CD14-positive monocyte (primary cell): ENCODE measurements at regions of chr4 and their contacts with region 1.

Region 1: GRCh38 chr4:51842554-51843308 is at the start of gene DCUN1D4:
- DNase-seq: peak; percentile 96 to 98 (median 97)
- H3K4me3 ChIP-seq: peak within 1 kb of the TSS; percentile 71 to 96 (median 86)
- H3K4me3 Mint-ChIP-seq: peak within 1 kb of the TSS; percentile 97 to 98
- H3K27ac ChIP-seq: peak within 1 kb of the TSS; percentile 25 to 53
- H3K27ac Mint-ChIP-seq: peak within 1 kb of the TSS; percentile 66 to 95 (median 84)
- H3K4me1 ChIP-seq: peaks cover 13 to 22% of the 10 kb centered on the region in 2 donors
- H3K4me1 Mint-ChIP-seq: peaks cover 14% of the 10 kb centered on the region
- H3K27me3 ChIP-seq: peaks cover 0 to 9% of the 10 kb centered on the region in 2 donors
- H3K27me3 Mint-ChIP-seq: peaks cover 5 to 9% (median 7%) of the 10 kb centered on the region in 3 donors
- CTCF ChIP-seq: peak; percentile 28
- polyA plus RNA-seq, gene DCUN1D4: 4.7 to 15.2 (median 6.9) TPM

Region 2: DNA sequence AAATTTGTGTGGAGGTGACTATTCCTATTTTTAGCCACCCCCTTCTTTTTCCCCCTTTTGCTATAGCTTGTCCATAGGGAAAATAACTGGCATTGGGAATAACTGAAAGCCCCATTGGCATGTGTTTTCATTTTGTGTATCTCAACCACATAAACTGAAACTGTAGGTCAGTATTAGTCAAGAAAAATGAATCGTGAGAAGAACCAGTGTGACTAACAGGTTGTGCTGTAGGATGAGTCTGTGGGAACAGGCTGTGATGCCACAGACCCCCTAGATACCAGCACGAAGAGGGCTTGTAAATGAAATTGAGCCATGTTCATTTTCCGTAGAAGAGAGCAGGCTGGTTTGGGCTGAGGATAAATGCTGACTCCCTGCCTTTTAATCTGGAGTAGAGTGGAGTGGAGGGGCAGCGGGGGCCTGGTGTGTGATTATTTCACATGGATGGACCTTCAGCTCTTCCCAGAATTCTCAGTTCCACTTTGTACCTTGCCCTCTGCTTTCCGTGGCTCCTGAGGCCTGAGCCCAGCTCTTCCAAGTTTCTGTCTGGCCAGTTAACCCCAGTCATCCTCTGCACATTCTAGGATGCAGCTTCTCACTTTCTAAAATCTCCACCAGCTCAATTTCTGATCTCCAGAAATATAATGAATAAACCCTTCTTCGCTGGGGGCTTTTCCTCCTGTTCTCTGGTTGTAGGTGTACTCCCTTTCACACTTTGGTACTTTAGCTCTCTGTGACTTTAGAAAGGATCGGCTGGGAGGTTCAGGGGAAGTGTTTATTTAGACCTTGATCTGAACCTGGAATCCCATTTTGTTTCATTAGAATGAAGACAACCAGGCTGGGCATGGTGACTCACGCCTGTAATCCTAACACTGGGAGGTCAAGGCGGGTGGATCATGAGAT is 37.5 kb after region 1 on chr4:
- intact Hi-C with region 1: no loop called
- DNase-seq: no peak
- H3K4me3 ChIP-seq: no peak overlapping the region
- H3K4me3 Mint-ChIP-seq: no peak overlapping the region
- H3K27ac ChIP-seq: no peak overlapping the region
- H3K27ac Mint-ChIP-seq: peak overlapping the region in 3 of 7 donors; percentile 8 to 74 (median 22)
- H3K4me1 ChIP-seq: no peaks in the 10 kb centered on the region
- H3K4me1 Mint-ChIP-seq: no peaks in the 10 kb centered on the region
- H3K27me3 ChIP-seq: no peaks in the 10 kb centered on the region
- H3K27me3 Mint-ChIP-seq: peaks cover 0 to 2% (median 0%) of the 10 kb centered on the region in 3 donors
- CTCF ChIP-seq: no peak

Region 3: GRCh38 chr4:51906167-51906958 is 63.6 kb after region 1 on chr4:
- intact Hi-C with region 1: loop called in 1 of 2 experiments (anchors 10 kb)
- DNase-seq: peak; percentile 74 to 87 (median 82)
- H3K4me3 ChIP-seq: peak overlapping the region in 2 of 3 experiments; percentile 27 to 40
- H3K4me3 Mint-ChIP-seq: peak overlapping the region; percentile 6 to 71
- H3K27ac ChIP-seq: peak overlapping the region; percentile 58 to 72
- H3K27ac Mint-ChIP-seq: peak overlapping the region; percentile 77 to 91 (median 88)
- H3K4me1 ChIP-seq: peaks cover 28 to 35% of the 10 kb centered on the region in 2 donors
- H3K4me1 Mint-ChIP-seq: peaks cover 44% of the 10 kb centered on the region
- H3K27me3 ChIP-seq: no peaks in the 10 kb centered on the region
- H3K27me3 Mint-ChIP-seq: peaks cover 0 to 2% (median 0%) of the 10 kb centered on the region in 3 donors
- CTCF ChIP-seq: no peak

Region 4: DNA sequence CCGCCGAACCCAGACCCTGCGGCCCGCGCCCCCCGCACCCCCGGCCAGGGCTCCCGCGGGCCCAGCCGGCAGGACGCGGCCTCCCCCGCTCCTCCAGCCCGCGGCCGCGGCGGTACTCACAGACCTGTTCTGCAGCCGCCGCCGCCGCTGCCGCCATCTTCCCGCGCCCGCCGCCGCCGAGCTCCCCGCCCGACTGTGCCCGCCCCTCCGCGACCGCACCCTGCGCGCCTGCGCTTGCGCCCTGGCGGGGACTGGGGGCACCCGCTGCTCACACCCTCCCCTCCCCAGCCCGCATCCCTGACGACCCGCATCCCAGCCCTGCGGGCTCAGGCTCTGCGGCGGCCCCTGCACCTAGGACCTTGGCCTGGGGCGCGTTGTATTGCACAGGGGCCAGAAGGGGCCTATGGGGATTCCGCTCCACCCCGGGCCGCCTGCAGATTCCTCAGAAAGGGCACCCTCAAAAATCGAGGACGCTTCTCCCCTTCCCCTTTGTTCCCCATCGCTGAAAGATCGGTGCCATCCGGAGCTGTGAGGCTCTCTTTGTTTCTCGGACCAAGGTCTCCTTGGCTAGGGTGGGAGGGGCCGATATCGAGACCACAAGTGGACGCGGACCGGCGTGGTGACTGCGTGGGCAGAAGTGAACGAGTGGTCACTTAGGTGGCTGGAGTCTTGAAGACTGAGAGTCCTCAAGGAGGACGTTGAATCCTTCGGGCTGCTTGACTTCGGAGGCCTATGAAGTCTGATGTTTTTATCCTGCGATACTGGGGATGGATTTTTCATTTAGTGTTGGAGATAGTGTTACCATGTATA is 195.6 kb after region 1 on chr4 and contains the start of gene SGCB:
- intact Hi-C with region 1: loop called in 1 of 2 experiments (anchors 10 kb)
- DNase-seq: peak in 2 of 3 donors; percentile 15 to 20
- H3K4me3 ChIP-seq: peak within 1 kb of the TSS; percentile 33 to 78 (median 48)
- H3K4me3 Mint-ChIP-seq: peak within 1 kb of the TSS; percentile 78 to 94
- H3K27ac ChIP-seq: no peak within 1 kb of the TSS
- H3K27ac Mint-ChIP-seq: no peak within 1 kb of the TSS
- H3K4me1 ChIP-seq: peaks cover 9 to 16% of the 10 kb centered on the region in 2 donors
- H3K4me1 Mint-ChIP-seq: peaks cover 16% of the 10 kb centered on the region
- H3K27me3 ChIP-seq: peaks cover 65 to 79% of the 10 kb centered on the region in 2 donors
- H3K27me3 Mint-ChIP-seq: peaks cover 52 to 73% (median 58%) of the 10 kb centered on the region in 3 donors
- CTCF ChIP-seq: no peak
- polyA plus RNA-seq, gene SGCB: 0.77 to 0.96 (median 0.95) TPM

Region 5: GRCh38 chr4:52721968-52722815 is 879.5 kb after region 1 on chr4:
- intact Hi-C with region 1: loop called in 1 of 2 experiments (anchors 5 kb)
- DNase-seq: peak; percentile 92 to 94 (median 92)
- H3K4me3 ChIP-seq: peak overlapping the region; percentile 65 to 82 (median 74)
- H3K4me3 Mint-ChIP-seq: peak overlapping the region; percentile 79 to 88
- H3K27ac ChIP-seq: peak overlapping the region; percentile 71 to 82
- H3K27ac Mint-ChIP-seq: peak overlapping the region; percentile 68 to 92 (median 88)
- H3K4me1 ChIP-seq: peaks cover 13 to 15% of the 10 kb centered on the region in 2 donors
- H3K4me1 Mint-ChIP-seq: peaks cover 12% of the 10 kb centered on the region
- H3K27me3 ChIP-seq: no peaks in the 10 kb centered on the region
- H3K27me3 Mint-ChIP-seq: peaks cover 1 to 5% (median 5%) of the 10 kb centered on the region in 3 donors
- CTCF ChIP-seq: no peak

Region 6: GRCh38 chr4:53365486-53366300 is 1523.0 kb after region 1 on chr4 and contains the start of gene SCFD2:
- intact Hi-C with region 1: loop called in 1 of 2 experiments (anchors 5 kb)
- DNase-seq: peak; percentile 97 to 99 (median 97)
- H3K4me3 ChIP-seq: peak within 1 kb of the TSS; percentile 59 to 99 (median 84)
- H3K4me3 Mint-ChIP-seq: peak within 1 kb of the TSS; percentile 90 to 97
- H3K27ac ChIP-seq: peak within 1 kb of the TSS; percentile 42 to 90
- H3K27ac Mint-ChIP-seq: peak within 1 kb of the TSS; percentile 90 to 95 (median 93)
- H3K4me1 ChIP-seq: peaks cover 18 to 23% of the 10 kb centered on the region in 2 donors
- H3K4me1 Mint-ChIP-seq: peaks cover 41% of the 10 kb centered on the region
- H3K27me3 ChIP-seq: no peaks in the 10 kb centered on the region
- H3K27me3 Mint-ChIP-seq: peaks cover 4 to 13% (median 6%) of the 10 kb centered on the region in 3 donors
- CTCF ChIP-seq: no peak
- polyA plus RNA-seq, gene SCFD2: 5.4 to 9.4 (median 6.7) TPM